IMR-90 (cell line): ENCODE measurements at regions of chr2 and their contacts with region 1.

Region 1: DNA sequence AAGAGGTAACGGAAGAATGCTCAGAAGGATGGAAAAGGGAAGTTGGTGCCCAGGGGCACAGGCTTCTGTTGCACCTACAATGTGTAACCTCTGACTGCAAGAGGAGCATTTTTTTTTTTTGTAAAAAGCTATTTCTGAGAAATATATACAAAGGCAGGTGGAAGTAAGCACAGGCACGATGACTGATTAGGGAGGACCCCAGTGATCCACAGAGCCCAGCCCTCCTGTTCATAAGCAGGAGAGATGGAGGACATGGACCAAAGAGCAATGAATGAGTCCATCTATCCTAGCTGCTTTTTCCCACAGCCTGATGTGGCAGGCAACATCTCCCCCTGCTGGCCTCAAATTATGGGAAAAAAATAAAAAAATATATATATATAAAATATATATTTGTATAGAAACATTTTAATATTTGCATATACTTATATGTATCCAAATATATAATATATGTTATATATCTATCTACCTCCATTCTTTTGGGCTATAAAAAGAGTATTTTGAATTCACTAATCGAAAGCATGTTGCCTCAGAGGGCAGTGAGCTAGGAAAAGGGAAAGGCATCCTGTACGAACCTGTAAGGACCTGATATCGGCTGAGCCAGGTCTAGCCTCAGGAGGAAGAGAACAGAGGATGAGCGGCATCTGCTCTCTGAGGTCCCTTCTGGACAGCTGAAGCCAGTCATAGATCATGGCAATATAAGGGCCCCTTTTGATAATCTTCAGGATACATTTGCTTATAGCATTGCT is 166.0 kb upstream of the STK17B start:
- DNase-seq: peak; percentile 58
- ATAC-seq: peak; percentile 25; the same call in 1 of the 2 replicates
- H3K4me3 ChIP-seq: no peak overlapping the region
- H3K27ac ChIP-seq: no peak overlapping the region
- H3K4me1 ChIP-seq: peaks cover 18% of the 10 kb centered on the region
- H3K27me3 ChIP-seq: no peaks in the 10 kb centered on the region
- CTCF ChIP-seq: peak; percentile 56
- POLR2A ChIP-seq: no peak
- RAD21 ChIP-seq: peak; percentile 83

Region 2: DNA sequence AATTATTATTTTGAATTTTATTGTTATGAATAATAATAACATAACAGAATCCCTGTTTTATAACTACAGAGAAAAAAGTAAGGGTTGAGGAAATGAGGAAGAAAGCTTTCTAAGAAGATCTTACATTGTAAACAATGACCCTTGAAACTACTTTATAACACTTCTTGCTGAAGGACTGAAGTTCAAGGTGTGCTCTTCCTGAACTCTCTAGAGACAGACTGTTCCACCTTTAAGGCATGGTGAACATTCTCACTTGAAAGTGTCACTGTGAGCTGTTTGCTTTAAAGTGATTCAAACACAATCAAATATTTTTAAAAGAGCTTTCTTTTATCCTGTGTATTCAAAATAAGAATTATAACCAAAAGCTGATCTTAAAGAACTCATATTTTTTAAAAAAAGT is 400.2 kb before region 1 on chr2:
- CTCF ChIA-PET with region 1: interaction called, 3 read pairs
- POLR2A ChIA-PET with region 1: no interaction called
- dilution Hi-C with region 1: no loop called
- in situ Hi-C with region 1: no loop called
- intact Hi-C with region 1: loop called (anchors 2 kb)
- DNase-seq: no peak
- ATAC-seq: no peak
- H3K4me3 ChIP-seq: no peak overlapping the region
- H3K27ac ChIP-seq: no peak overlapping the region
- H3K4me1 ChIP-seq: no peaks in the 10 kb centered on the region
- H3K27me3 ChIP-seq: no peaks in the 10 kb centered on the region
- CTCF ChIP-seq: no peak
- POLR2A ChIP-seq: no peak
- RAD21 ChIP-seq: no peak

Region 3: DNA sequence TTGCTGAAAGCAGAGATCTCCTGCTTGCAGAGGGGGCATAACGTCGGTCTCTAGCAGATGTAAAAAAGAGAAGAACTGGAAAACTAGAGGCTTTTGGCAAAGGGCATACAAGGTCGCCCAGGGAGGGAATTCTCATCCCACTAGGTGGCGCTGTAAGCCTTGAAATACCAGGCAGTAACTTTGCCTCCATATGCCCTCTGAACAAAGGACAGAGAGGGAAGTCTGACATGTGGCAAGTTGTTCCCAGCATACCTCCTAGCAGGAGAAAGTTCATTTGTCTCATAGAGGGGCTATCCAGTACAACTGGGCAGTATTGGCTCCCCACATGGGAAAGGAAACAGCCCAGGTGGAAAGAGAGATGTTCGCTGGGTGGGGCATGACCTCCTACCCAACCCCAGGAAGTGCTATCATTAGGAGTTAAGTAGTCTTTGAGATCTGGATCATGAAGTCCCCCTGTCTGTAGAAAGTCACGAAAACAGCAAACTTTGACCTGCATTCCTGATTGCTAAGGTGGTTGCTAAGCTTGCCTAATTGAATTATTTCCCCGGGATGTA is 205.9 kb before region 1 on chr2:
- CTCF ChIA-PET with region 1: interaction called, 3 read pairs
- POLR2A ChIA-PET with region 1: no interaction called
- dilution Hi-C with region 1: no loop called
- in situ Hi-C with region 1: no loop called
- intact Hi-C with region 1: loop called (anchors 5 kb)
- DNase-seq: peak; percentile 44
- ATAC-seq: 0 out of 2 replicates have a peak, but pooled peaks have one; percentile 11
- H3K4me3 ChIP-seq: no peak overlapping the region
- H3K27ac ChIP-seq: no peak overlapping the region
- H3K4me1 ChIP-seq: no peaks in the 10 kb centered on the region
- H3K27me3 ChIP-seq: no peaks in the 10 kb centered on the region
- CTCF ChIP-seq: peak; percentile 44
- POLR2A ChIP-seq: no peak
- RAD21 ChIP-seq: peak; percentile 63

Region 4: DNA sequence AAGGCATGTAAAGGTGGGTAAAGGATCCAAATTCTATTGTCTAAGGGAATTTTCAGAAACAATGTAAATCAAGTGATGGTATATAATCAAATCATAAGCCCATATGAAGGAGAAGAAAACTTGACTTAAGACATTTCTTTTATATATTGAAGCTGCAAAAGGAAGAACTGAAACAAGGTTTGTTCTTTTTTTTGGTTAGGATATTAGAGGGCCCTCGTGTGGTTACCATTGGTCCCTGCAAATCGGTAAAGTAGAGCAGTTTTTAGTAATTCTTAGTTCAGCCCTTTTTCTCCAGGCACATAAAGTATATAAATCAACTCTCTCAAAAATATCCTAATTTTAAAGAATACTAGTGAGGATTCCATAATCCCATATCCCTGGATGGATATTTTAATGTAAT is 60.4 kb before region 1 on chr2:
- CTCF ChIA-PET with region 1: interaction called, 4 read pairs
- POLR2A ChIA-PET with region 1: no interaction called
- dilution Hi-C with region 1: no loop called
- in situ Hi-C with region 1: no loop called
- intact Hi-C with region 1: loop called (anchors 10 kb)
- DNase-seq: peak; percentile 64
- ATAC-seq: no peak
- H3K4me3 ChIP-seq: no peak overlapping the region
- H3K27ac ChIP-seq: no peak overlapping the region
- H3K4me1 ChIP-seq: peaks cover 21% of the 10 kb centered on the region
- H3K27me3 ChIP-seq: no peaks in the 10 kb centered on the region
- CTCF ChIP-seq: peak; percentile 69
- POLR2A ChIP-seq: no peak
- RAD21 ChIP-seq: peak; percentile 68

Region 5: DNA sequence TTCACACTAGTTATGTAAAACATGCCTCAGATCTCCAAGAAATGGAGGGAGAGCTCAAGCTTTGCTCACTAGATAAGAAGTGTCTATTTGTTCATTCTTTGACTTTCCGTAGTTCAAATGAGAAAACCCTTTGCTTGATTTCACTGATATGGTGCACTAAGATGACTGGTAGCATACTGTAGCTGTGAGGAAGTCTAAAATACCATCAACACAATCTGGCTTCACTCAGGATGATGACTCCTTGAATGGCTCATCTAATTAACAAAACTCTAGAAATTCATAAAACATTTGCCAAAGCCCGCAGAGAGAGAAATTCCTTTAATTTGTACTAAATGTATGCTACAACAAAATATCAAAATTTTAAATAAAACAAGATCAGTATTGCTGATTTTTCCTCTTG is 13.2 kb before region 1 on chr2:
- CTCF ChIA-PET with region 1: interaction called, 4 read pairs
- POLR2A ChIA-PET with region 1: no interaction called
- dilution Hi-C with region 1: no loop called
- in situ Hi-C with region 1: no loop called
- intact Hi-C with region 1: loop called (anchors 1 kb)
- DNase-seq: peak; percentile 42
- ATAC-seq: no peak
- H3K4me3 ChIP-seq: no peak overlapping the region
- H3K27ac ChIP-seq: no peak overlapping the region
- H3K4me1 ChIP-seq: peaks cover 11% of the 10 kb centered on the region
- H3K27me3 ChIP-seq: no peaks in the 10 kb centered on the region
- CTCF ChIP-seq: no peak
- POLR2A ChIP-seq: no peak
- RAD21 ChIP-seq: no peak

Region 6: DNA sequence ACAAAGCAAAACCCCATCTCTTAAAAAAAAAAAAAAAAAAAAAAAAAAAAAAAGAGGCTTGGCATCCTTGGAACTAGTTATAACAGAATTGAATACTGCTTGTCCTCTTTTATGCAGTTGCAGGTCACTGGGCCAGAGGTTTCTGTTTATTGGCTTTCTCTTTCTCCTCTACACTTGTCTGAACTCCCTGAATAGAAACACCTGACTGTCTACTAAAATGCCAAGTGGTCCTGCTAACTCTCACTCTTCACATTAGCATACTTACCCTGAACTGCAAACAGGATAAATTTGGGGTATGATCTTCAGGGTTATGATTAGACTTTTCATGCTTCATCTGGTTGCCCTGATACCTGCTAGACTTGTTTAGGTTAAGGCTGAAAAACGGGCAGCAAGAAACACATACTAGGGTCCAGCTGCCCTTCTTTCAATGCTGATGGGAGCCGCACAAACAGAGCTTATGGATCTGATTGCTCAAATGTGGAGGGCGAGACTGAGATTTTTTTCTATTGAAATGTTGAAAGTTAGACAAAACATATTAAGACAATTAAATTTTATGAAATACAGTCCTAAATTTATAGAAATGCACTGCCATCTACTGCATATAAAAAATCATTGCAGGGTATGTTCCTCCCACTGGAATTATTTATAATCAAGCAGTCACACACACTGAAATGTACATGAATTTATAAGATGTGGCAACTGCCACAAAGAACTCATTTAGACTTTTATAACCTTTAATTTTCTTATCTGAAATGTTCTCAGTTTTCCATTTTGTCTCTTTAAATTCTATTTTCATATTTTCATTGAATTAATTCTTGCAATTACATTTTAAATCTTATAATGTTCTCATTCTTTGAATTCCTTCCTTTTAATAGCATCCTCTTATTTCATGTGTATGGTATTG is 421.3 kb after region 1 on chr2:
- CTCF ChIA-PET with region 1: no interaction called
- POLR2A ChIA-PET with region 1: no interaction called
- dilution Hi-C with region 1: no loop called
- in situ Hi-C with region 1: no loop called
- intact Hi-C with region 1: loop called (anchors 2 kb)
- DNase-seq: peak; percentile 46
- ATAC-seq: peak; percentile 85
- H3K4me3 ChIP-seq: no peak overlapping the region
- H3K27ac ChIP-seq: no peak overlapping the region
- H3K4me1 ChIP-seq: no peaks in the 10 kb centered on the region
- H3K27me3 ChIP-seq: no peaks in the 10 kb centered on the region
- CTCF ChIP-seq: peak; percentile 66
- POLR2A ChIP-seq: no peak
- RAD21 ChIP-seq: peak; percentile 58

Region 7: DNA sequence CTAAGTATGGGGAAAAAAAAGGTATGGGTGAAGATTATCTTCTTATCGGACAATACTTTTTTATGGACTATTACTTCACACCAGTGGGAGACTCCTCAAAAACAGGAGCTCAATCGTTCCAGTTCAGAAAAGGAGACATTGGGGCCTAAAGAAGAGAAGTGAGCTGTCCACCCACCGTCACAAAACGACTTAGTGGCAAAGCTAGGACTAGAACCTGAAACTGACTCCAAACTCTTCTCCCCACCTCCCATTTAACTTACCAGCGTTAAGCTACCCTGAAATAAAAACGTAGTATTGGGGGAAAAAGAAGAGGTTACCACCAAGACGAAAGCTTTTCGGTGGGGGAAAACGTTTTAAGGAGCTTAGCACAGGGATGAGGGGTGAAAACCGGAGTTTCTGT is 461.6 kb after region 1 on chr2:
- CTCF ChIA-PET with region 1: no interaction called
- POLR2A ChIA-PET with region 1: no interaction called
- dilution Hi-C with region 1: no loop called
- in situ Hi-C with region 1: no loop called
- intact Hi-C with region 1: no loop called
- DNase-seq: no peak
- ATAC-seq: peak; percentile 8; the same call in 1 of the 2 replicates
- H3K4me3 ChIP-seq: peak overlapping the region; percentile 95
- H3K27ac ChIP-seq: peak overlapping the region; percentile 77
- H3K4me1 ChIP-seq: no peaks in the 10 kb centered on the region
- H3K27me3 ChIP-seq: no peaks in the 10 kb centered on the region
- CTCF ChIP-seq: no peak
- POLR2A ChIP-seq: no peak
- RAD21 ChIP-seq: no peak